AG04449 (cell line): ENCODE measurements at regions of chr21 and their contacts with region 1.

Region 1: DNA sequence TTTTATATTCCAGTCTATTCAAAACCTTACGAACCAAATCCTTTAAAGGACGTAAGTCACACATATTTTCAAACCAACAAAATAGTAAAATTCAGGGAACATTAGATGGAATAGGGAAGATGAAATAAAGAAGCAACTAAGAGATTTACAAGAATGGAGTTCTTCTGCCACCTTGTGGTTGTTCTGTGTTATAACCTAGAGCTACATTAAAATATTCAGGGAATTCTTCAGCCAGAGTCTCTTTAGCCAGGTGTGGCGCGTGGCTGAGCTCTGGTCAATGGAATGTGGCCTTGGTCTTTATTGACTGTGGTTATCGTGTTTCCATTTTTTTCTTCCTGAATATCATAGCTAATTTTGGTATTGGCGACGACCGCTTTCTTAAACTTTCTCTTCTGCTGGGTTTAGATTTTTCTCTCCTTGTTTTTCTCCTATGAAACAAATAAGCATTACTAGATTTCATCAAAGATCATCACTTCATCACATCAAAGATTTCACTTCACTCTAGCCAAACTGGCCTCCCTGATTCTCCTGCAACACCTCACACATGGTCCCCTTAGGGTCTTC is 221.3 kb downstream of the MRPL39 start:
- DNase-seq: no peak
- H3K4me3 ChIP-seq: no peak overlapping the region
- CTCF ChIP-seq: peak; percentile 44

Region 2: GRCh38 chr21:24895885-24896734 is 489.9 kb before region 1 on chr21:
- CTCF ChIA-PET with region 1: interaction called, 66 read pairs
- POLR2A ChIA-PET with region 1: no interaction called
- DNase-seq: no peak
- H3K4me3 ChIP-seq: no peak overlapping the region
- CTCF ChIP-seq: peak; percentile 51

Region 3: GRCh38 chr21:25283720-25284119 is 102.3 kb before region 1 on chr21:
- CTCF ChIA-PET with region 1: interaction called, 47 read pairs
- POLR2A ChIA-PET with region 1: no interaction called
- DNase-seq: no peak
- H3K4me3 ChIP-seq: no peak overlapping the region
- CTCF ChIP-seq: peak; percentile 32

Region 4: GRCh38 chr21:25292396-25292795 is 93.6 kb before region 1 on chr21:
- CTCF ChIA-PET with region 1: interaction called, 12 read pairs
- POLR2A ChIA-PET with region 1: no interaction called
- DNase-seq: no peak
- H3K4me3 ChIP-seq: no peak overlapping the region
- CTCF ChIP-seq: no peak

Region 5: DNA sequence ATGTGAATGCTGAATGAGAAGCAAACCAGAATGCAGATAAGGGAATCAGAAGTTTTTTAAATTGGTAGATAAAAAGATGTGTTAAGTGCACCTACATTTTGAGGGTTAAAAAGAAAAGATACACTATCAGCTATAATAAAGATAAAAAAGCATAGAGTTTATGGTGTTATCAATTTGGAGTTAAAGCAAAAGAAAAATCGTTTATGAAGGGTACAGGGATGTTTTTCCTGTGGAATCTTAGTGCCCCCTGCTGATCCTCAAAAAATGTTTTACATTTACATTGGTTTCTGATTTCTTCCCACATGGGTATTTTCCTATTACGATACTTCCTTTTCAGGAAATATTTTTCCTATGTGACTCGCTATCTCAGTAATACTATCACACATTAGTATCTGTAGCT is 72.2 kb before region 1 on chr21:
- CTCF ChIA-PET with region 1: interaction called, 29 read pairs
- POLR2A ChIA-PET with region 1: no interaction called
- DNase-seq: no peak
- H3K4me3 ChIP-seq: no peak overlapping the region
- CTCF ChIP-seq: peak; percentile 23

Region 6: DNA sequence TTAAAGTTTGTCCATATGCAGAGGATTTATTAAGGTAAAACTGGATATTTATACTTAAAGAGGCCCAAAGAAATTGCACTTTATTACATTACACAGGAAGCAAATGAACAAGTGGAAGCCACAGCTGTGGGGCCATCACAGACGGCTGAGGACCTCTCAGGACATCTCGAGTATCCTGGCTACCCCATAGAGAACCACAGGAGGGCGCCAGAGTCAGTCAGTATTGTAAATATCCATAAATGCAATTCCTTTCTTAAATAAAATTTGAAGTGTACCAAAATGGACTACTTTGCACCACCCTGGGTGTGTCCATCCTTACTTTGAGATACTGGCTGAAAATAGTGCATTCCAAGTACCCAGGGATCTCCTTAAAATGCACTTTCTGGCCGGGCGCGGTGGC is 35.9 kb before region 1 on chr21:
- CTCF ChIA-PET with region 1: interaction called, 175 read pairs
- POLR2A ChIA-PET with region 1: no interaction called
- DNase-seq: no peak
- H3K4me3 ChIP-seq: no peak overlapping the region
- CTCF ChIP-seq: peak; percentile 60

Region 7: DNA sequence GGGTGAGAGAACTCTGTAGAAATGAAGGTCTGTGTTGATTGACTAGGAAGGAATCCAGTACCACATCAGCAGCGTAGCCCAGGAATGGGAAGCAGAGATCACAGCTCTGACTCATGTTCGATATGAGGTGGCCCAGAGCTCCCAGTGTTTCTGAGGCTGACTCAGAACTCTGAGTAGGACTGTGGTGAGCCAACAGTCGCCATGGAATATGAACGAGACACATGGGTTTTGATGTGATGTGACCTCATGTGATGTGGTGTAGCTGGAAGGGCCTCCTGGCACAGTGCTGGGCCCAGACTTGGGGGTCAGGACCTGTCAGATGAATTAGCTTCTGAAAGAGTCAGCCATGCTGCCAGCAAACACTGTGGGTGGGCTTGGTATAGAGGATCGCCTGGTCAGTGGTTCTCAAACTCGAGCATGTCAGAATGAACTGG is 15.7 kb before region 1 on chr21:
- CTCF ChIA-PET with region 1: interaction called, 13 read pairs
- POLR2A ChIA-PET with region 1: no interaction called
- DNase-seq: peak; percentile 88
- H3K4me3 ChIP-seq: no peak overlapping the region; the same call in 1 of the 2 replicates
- CTCF ChIP-seq: no peak

Region 8: GRCh38 chr21:25405984-25406383 is 20.0 kb after region 1 on chr21:
- CTCF ChIA-PET with region 1: no interaction called
- POLR2A ChIA-PET with region 1: no interaction called
- DNase-seq: no peak
- H3K4me3 ChIP-seq: no peak overlapping the region
- CTCF ChIP-seq: no peak

Region 9: DNA sequence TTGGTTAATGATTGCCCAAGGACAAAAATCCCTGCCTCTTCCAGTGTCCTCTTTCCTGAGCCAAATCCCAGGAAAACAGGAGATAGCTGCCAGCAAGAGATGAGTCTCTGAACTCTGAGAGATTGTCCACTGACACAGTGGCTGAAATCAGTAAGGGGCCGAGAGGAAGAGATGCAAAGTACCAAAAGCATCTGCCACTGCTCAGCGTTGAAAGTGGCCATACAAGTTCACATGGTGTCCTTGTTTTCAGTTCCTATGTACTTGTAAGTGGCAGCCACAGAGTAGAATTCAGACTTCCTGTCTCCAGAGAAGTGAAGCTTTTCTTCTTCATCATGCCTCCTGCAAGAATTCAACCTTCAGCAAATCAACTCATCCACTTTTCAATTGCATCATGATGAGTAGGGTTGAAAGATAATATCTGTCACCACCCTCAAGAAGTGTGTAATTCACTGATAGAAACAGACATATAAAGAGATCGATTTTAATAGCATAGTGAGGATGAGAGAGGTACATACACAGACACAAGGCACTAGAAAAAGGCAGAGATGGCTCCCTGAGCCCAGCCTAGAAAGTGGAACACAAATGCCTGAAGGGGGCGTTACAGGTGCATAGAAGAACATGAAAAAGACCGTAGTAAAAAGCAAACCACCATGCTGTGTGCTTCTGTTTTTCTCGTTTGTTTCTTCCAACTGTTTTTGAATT is 35.5 kb after region 1 on chr21:
- CTCF ChIA-PET with region 1: no interaction called
- POLR2A ChIA-PET with region 1: no interaction called
- DNase-seq: no peak
- H3K4me3 ChIP-seq: no peak overlapping the region
- CTCF ChIP-seq: peak; percentile 56

Region 10: DNA sequence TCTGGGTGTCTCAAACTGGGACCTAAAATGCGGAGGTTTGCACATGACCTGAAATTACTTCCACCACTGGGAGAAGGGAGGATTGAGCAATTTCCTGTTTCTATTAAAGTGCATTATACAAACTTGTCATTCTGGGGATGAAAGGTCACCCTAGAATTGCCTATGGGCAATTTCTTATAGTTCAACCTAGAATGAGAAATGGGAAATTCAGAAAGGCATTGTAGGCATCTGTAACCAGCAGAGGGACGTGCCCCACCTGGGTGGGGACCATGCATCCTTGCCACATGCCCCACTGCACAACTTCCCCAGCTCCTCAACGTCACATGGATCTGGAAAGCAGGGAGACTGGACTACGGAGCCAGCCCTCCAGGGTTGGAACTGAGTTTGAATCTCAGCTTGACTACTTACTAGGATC is 174.3 kb after region 1 on chr21:
- CTCF ChIA-PET with region 1: no interaction called
- POLR2A ChIA-PET with region 1: no interaction called
- DNase-seq: no peak
- H3K4me3 ChIP-seq: no peak overlapping the region
- CTCF ChIP-seq: no peak

Region 11: DNA sequence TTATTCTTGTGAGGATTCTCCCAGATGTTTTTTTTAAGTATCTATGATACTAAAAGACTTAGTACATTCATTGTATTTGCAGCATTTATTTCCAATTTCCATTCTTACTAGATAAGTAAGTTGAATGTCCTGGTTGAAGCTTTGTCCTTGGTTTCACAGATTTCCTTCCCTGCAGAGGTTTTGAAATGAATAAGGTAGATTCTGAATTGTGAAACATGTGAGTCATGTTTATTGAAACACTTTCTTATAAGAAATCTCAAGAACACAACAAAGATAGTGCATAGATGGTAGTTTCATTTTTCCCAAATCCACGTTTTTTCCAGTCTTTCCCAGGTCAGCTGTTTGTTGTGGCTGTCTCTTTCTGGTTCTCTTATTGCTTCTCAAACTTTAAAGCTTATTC is 373.6 kb after region 1 on chr21:
- CTCF ChIA-PET with region 1: no interaction called
- POLR2A ChIA-PET with region 1: no interaction called
- DNase-seq: no peak
- H3K4me3 ChIP-seq: no peak overlapping the region
- CTCF ChIP-seq: no peak